Activated CD8-positive, alpha-beta memory T cell treated with anti-CD3 and anti-CD28 coated beads, Interleukin-2, amount 10 ng/mL, durations not matched to agents 7 days and 5 days (primary cell): ENCODE measurements at regions of chr9 and their contacts with region 1.

Region 1: DNA sequence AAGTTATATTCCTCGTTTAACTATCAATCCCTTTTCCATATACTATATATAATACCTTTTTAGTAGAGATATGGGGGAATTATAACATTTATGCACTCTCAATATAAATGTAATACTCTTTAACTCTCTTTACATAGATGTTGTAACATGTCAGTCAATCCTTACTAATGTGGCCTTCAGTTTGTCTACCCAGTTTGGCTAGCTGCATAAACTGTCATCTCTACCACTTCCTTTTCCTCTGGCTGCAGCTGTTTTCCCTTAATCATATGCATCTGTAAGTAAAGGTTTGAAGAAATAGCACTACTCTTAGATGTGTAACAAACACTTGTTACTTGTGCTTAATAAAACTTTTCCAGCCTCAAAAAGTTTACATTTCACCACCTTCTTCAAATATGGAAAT is 13.4 kb downstream of the ABHD17B start:
- DNase-seq: peak; percentile 66
- ATAC-seq: peak; percentile 69
- H3K4me3 Mint-ChIP-seq: peak overlapping the region; percentile 50
- H3K27ac Mint-ChIP-seq: peak overlapping the region; percentile 86
- H3K4me1 Mint-ChIP-seq: peaks cover 82% of the 10 kb centered on the region
- H3K27me3 Mint-ChIP-seq: no peaks in the 10 kb centered on the region

Region 2: GRCh38 chr9:71758785-71759184 is 138.8 kb before region 1 on chr9:
- CTCF ChIA-PET with region 1: no interaction called
- DNase-seq: no peak
- ATAC-seq: peak; percentile 22
- H3K4me3 Mint-ChIP-seq: no peak overlapping the region
- H3K27ac Mint-ChIP-seq: no peak overlapping the region
- H3K4me1 Mint-ChIP-seq: peaks cover 57% of the 10 kb centered on the region
- H3K27me3 Mint-ChIP-seq: no peaks in the 10 kb centered on the region

Region 3: GRCh38 chr9:71911253-71912074 is 13.9 kb after region 1 on chr9 and contains the start of gene C9orf85:
- CTCF ChIA-PET with region 1: interaction called, 11 read pairs
- DNase-seq: peak; percentile 99
- ATAC-seq: peak; percentile 95
- H3K4me3 Mint-ChIP-seq: peak within 1 kb of the TSS; percentile 95
- H3K27ac Mint-ChIP-seq: peak within 1 kb of the TSS; percentile 99
- H3K4me1 Mint-ChIP-seq: peaks cover 64% of the 10 kb centered on the region
- H3K27me3 Mint-ChIP-seq: no peaks in the 10 kb centered on the region
- total RNA-seq, gene C9orf85: 9.8 to 13.0 TPM